ENCODE measurements at regions of chr16 and their contacts with region 1.

Region 1: DNA sequence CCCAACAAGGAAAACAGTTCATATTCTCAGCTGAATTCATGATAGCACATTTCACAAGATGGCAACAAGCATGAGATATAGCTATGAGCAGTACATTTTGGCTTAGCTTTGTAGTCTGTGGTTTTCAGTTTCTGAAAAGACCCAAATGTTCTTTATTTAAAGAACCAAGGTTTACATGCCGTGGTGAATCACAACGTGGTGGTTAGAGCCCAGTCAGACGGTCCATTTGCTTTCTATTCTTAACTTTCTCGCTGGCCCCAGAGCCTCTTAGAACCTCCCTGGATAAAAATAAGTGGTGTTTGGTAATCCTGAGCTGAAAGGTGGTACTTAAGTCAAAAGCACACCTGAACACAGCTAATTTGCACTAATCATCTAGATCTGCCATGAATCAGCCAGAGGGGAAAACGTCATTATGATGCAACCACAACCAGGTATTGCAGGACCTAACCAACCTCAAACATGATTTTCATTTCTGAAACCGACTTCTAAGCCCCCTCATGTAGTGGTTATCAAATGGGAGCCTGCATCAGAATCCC is 18.6 kb upstream of the HAPSTR1 start:
- DNase-seq: no peak
- H3K4me3 ChIP-seq: no peak overlapping the region
- H3K27ac ChIP-seq: no peak overlapping the region
- H3K4me1 ChIP-seq: no peaks in the 10 kb centered on the region
- H3K27me3 ChIP-seq: no peaks in the 10 kb centered on the region
- CTCF ChIP-seq: no peak
- POLR2A ChIP-seq: no peak

Region 2: GRCh38 chr16:9060225-9060624 is 12.6 kb before region 1 on chr16:
- CTCF ChIA-PET with region 1: no interaction called
- POLR2A ChIA-PET with region 1: no interaction called
- dilution Hi-C with region 1: no loop called
- intact Hi-C with region 1: loop called (anchors 1 kb)
- DNase-seq: no peak
- H3K4me3 ChIP-seq: no peak overlapping the region
- H3K27ac ChIP-seq: no peak overlapping the region
- H3K4me1 ChIP-seq: no peaks in the 10 kb centered on the region
- H3K27me3 ChIP-seq: no peaks in the 10 kb centered on the region
- CTCF ChIP-seq: no peak
- POLR2A ChIP-seq: no peak

Region 3: GRCh38 chr16:9134739-9135138 is 61.9 kb after region 1 on chr16:
- CTCF ChIA-PET with region 1: no interaction called
- POLR2A ChIA-PET with region 1: no interaction called
- dilution Hi-C with region 1: no loop called
- intact Hi-C with region 1: no loop called
- DNase-seq: peak; percentile 47
- H3K4me3 ChIP-seq: no peak overlapping the region
- H3K27ac ChIP-seq: no peak overlapping the region
- H3K4me1 ChIP-seq: no peaks in the 10 kb centered on the region
- H3K27me3 ChIP-seq: no peaks in the 10 kb centered on the region
- CTCF ChIP-seq: peak; percentile 57 to 70
- POLR2A ChIP-seq: no peak

Region 4: DNA sequence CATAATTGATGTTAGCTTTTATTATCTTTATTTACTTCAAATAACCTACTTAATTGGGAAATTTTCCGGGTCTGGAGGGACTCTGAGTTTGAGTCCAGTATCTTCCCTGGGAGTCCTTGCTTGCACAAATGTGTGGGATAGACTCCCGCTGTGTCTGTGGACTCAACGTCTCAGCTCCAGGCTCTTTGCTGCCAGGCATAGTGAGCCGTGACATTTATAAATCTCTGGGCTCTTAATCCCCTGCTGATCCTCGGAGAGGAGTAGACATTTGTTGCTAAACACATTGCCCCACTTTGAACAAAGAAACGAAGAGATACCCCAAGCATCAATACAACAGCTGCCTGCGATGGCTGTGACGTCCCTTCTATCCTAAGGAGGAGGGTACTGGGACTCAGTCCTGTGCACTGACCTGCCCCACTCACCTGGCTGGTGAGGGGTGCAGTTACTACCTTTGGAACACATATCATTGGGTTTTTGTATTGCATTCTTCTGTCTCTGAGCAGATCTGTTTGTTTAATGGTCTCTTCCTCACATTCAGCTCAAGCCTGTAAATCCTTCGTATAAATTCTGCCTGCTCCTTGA is 335.5 kb after region 1 on chr16:
- CTCF ChIA-PET with region 1: no interaction called
- POLR2A ChIA-PET with region 1: no interaction called
- dilution Hi-C with region 1: no loop called
- intact Hi-C with region 1: no loop called
- DNase-seq: no peak
- H3K4me3 ChIP-seq: no peak overlapping the region
- H3K27ac ChIP-seq: no peak overlapping the region
- H3K4me1 ChIP-seq: no peaks in the 10 kb centered on the region
- H3K27me3 ChIP-seq: no peaks in the 10 kb centered on the region
- CTCF ChIP-seq: no peak
- POLR2A ChIP-seq: no peak